Endothelial cell of umbilical vein (primary cell): ENCODE measurements at regions of chrX and their contacts with region 1.

Region 1: DNA sequence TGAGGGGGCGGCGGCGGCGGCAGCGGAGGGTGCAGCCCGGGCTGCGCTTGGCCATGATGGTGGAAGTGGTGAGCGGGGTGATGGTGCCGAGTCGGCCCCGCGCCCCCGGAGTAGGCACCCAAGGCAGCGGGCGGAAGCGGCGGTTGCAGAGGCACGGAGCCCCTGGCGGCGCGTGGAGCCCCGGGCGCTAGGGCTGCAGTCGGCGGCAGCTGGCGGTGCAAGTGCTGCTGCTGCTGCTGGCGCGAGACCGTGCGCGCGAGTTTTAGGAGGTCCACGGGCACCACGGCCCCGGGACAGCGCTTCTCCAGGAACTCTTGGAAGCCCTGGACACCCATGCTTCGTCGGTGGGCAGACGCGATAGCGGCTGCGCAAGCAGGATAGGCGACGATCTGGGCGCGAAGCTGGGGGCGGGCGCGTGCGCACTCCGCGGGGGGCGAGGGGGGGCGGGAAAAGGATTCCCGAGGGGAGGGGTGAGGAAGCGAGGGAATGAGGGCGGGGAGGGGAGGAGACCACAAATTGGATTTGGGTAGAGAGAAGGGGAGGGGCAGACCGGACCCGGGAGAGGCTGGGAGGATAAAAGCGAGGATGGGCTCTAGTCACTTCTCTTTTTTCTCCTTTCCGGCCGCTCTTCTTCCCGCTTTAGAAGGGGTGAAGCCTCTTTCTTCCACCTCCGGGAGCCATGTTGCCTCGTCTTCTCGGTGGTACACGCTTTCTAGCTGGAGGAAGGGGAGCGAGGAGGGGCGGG is at the start of gene FAM120C:
- DNase-seq: peak; percentile 76
- H3K4me3 ChIP-seq: peak within 1 kb of the TSS; percentile 55 to 81 (median 81)
- H3K27ac ChIP-seq: peak within 1 kb of the TSS; percentile 72
- H3K4me1 ChIP-seq: peaks cover 35% of the 10 kb centered on the region
- H3K27me3 ChIP-seq: no peaks in the 10 kb centered on the region
- CTCF ChIP-seq: no peak
- POLR2A ChIP-seq: peak; percentile 55
- total RNA-seq, gene FAM120C: 10.1 and 11.4 TPM in 2 replicates

Region 2: GRCh38 chrX:54223581-54223980 is 40.5 kb after region 1 on chrX:
- CTCF ChIA-PET with region 1: no interaction called
- POLR2A ChIA-PET with region 1: no interaction called
- dilution Hi-C with region 1: no loop called
- intact Hi-C with region 1: no loop called
- DNase-seq: no peak
- H3K4me3 ChIP-seq: no peak overlapping the region
- H3K27ac ChIP-seq: no peak overlapping the region
- H3K4me1 ChIP-seq: no peaks in the 10 kb centered on the region
- H3K27me3 ChIP-seq: no peaks in the 10 kb centered on the region
- CTCF ChIP-seq: no peak
- POLR2A ChIP-seq: no peak

Region 3: DNA sequence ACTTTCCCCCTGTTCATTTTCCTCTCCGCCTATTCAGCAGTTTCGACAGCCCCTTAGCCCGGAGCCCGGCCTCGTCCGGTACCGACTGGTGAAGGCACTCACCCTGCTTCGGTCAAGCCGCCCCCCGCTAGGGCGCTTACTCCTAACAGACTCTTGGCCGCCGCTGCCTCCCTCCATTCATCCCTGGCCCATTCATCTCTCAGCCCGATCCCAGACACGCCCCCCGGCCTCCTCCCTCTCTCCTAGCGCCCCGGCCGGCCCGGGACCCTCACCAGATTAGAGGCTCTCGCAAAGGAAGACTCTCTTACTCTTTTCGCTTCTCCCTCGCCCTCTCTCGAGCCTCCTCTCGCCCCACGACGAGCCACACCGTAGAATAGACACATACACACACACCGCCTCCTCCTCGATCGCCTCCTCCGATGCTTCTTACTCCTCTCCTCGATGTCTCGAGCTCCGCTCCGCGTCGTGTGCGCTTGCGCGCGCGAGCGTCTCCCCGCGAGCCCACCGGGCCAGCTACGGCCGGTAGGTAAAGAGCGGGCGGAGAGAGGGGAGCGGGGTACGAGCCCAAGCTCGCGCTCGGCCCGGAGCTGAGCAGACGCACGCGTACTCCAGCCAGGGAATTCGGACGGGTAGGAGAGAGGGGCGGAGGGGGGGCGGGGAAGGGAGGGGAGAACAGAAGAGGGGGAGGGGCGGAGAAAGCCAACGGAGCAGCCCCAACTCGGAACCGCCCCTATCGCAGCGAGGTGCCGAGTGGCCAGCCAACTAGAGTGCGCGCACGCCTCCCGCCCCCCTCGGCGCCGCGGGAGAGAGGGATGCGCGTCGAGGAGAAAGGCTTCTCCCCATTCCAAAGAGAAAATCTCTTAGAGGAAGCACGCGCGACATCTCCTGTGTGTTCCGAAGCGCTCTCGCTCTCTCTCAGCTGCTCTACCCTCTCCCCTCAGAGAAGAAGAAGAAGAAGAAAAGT is 174.7 kb after region 1 on chrX and contains the start of gene WNK3:
- CTCF ChIA-PET with region 1: no interaction called
- POLR2A ChIA-PET with region 1: no interaction called
- dilution Hi-C with region 1: no loop called
- intact Hi-C with region 1: loop called (anchors 5 kb)
- DNase-seq: peak; percentile 69
- H3K4me3 ChIP-seq: peak within 1 kb of the TSS; percentile 18 to 56 (median 44)
- H3K27ac ChIP-seq: no peak within 1 kb of the TSS
- H3K4me1 ChIP-seq: no peaks in the 10 kb centered on the region
- H3K27me3 ChIP-seq: peaks cover 3 to 6% of the 10 kb centered on the region in 2 experiments
- CTCF ChIP-seq: no peak
- POLR2A ChIP-seq: no peak
- total RNA-seq, gene WNK3: 2.6 and 2.7 TPM in 2 replicates

Region 4: GRCh38 chrX:55710701-55711100 is 1527.7 kb after region 1 on chrX:
- CTCF ChIA-PET with region 1: no interaction called
- POLR2A ChIA-PET with region 1: no interaction called
- dilution Hi-C with region 1: no loop called
- intact Hi-C with region 1: loop called (anchors 5 kb)
- DNase-seq: peak; percentile 86
- H3K4me3 ChIP-seq: no peak overlapping the region
- H3K27ac ChIP-seq: peak overlapping the region; percentile 76
- H3K4me1 ChIP-seq: peaks cover 39% of the 10 kb centered on the region
- H3K27me3 ChIP-seq: no peaks in the 10 kb centered on the region
- CTCF ChIP-seq: no peak
- POLR2A ChIP-seq: peak; percentile 36